Body of pancreas (tissue), 4 donors: ENCODE measurements at regions of chr18 and their contacts with region 1.

Region 1: GRCh38 chr18:51029694-51030536 is at the start of gene SMAD4:
- DNase-seq: peak; percentile 96 to 98 (median 96)
- ATAC-seq: peak; percentile 95
- H3K4me3 ChIP-seq: peak within 1 kb of the TSS; percentile 42 to 53
- H3K27ac ChIP-seq: peak within 1 kb of the TSS; percentile 95 to 98 (median 98)
- H3K4me1 ChIP-seq: peaks cover 59% of the 10 kb centered on the region
- H3K27me3 ChIP-seq: no peaks in the 10 kb centered on the region
- CTCF ChIP-seq: peak in 1 of 7 experiments; percentile 5
- POLR2A ChIP-seq: peak; percentile 91 to 95 (median 94)
- total RNA-seq, gene SMAD4: 78.6 to 173 TPM

Region 2: GRCh38 chr18:50973367-50974126 is 56.4 kb before region 1 on chr18:
- intact Hi-C with region 1: loop called (anchors 10 kb)
- DNase-seq: peak in 2 of 4 donors; percentile 42 to 50
- ATAC-seq: peak; percentile 77
- H3K4me3 ChIP-seq: no peak overlapping the region
- H3K27ac ChIP-seq: no peak overlapping the region
- H3K4me1 ChIP-seq: peaks cover 17% of the 10 kb centered on the region
- H3K27me3 ChIP-seq: no peaks in the 10 kb centered on the region
- CTCF ChIP-seq: no peak
- POLR2A ChIP-seq: no peak